CD8-positive, alpha-beta T cell (primary cell): ENCODE measurements at regions of chr6 and their contacts with region 1.

Region 1: DNA sequence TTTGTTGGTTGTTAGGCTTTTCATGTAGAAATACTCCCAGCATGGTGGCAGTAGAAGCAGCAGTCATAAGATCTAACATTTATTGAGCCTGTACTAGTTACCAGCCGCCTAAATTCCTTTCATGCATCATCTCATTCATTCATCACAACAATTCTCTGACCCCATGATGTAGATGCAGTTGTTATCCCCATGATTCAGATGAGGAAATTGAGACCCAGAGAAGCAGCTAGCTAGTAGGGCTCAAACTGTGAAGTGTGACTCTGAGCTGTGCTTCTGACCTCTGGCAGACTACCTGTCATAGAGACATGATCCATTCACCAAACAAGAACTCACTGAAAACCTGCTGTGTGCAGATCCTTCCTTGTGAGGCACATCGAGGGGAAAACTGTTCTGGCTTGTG is 16.9 kb downstream of the RREB1 start:
- DNase-seq: peak in 1 of 9 experiments; percentile 31
- ATAC-seq: no peak
- H3K4me3 ChIP-seq: no peak overlapping the region
- H3K4me3 Mint-ChIP-seq: no peak overlapping the region
- H3K27ac ChIP-seq: no peak overlapping the region
- H3K27ac Mint-ChIP-seq: peak overlapping the region; percentile 58
- H3K4me1 ChIP-seq: peaks cover 46% of the 10 kb centered on the region
- H3K4me1 Mint-ChIP-seq: peaks cover 60% of the 10 kb centered on the region
- H3K27me3 ChIP-seq: no peaks in the 10 kb centered on the region
- H3K27me3 Mint-ChIP-seq: no peaks in the 10 kb centered on the region
- CTCF ChIP-seq: no peak

Region 2: DNA sequence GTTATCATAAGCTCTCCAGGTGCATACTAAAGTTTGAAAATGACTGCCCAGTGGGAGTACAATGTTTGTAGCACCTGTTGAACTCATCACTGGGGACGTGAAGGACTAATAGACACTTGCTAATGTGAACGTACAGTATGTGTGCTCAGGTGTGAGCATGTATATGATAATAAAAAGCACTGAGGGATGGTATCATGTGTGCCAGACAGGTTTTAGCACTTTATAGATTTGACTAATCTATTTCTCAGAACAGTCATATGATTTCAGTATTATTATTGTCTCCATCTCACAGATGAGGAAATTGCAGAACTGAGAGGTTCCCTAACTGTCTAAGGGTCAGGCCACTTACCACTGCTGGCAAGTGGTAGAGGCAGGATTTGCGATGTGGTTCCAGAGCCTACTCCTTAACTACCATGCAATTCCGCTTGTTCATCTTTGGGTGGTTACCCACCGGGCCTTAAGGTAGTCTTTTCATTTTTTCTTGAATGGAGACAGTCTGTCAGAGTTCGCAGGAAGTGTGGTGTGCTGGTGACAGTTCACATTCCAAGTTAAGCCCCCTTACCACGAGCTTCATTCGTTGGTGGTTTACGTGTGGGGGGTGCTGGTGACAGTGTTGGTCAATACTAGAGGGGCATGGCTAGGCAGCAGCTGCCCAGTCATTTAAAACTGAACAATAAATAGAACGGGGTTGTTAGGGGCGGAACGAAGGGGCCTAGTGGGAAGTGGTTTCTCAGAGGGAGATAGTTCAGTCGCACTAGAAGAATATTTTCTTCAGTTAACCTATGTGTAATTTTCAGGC is 29.9 kb after region 1 on chr6:
- CTCF ChIA-PET with region 1: no interaction called
- POLR2A ChIA-PET with region 1: interaction called, 3 read pairs
- intact Hi-C with region 1: loop called in 1 of 2 experiments (anchors 5 kb)
- DNase-seq: peak in 3 of 9 experiments; percentile 28 to 50 (median 31)
- ATAC-seq: peak; percentile 75
- H3K4me3 ChIP-seq: no peak overlapping the region
- H3K4me3 Mint-ChIP-seq: peak overlapping the region; percentile 51
- H3K27ac ChIP-seq: peak overlapping the region; percentile 11 to 34
- H3K27ac Mint-ChIP-seq: peak overlapping the region; percentile 90
- H3K4me1 ChIP-seq: peaks cover 43% of the 10 kb centered on the region
- H3K4me1 Mint-ChIP-seq: peaks cover 86% of the 10 kb centered on the region
- H3K27me3 ChIP-seq: no peaks in the 10 kb centered on the region
- H3K27me3 Mint-ChIP-seq: no peaks in the 10 kb centered on the region
- CTCF ChIP-seq: no peak